ENCODE measurements at regions of chr11 and their contacts with region 1.

Region 1: GRCh38 chr11:79720115-79720514 is 279.3 kb upstream of the TENM4 start:
- DNase-seq: no peak
- H3K4me3 ChIP-seq: no peak overlapping the region
- H3K27ac ChIP-seq: no peak overlapping the region
- H3K27me3 ChIP-seq: no peaks in the 10 kb centered on the region
- CTCF ChIP-seq: no peak

Region 2: GRCh38 chr11:79708300-79708932 is 11.7 kb before region 1 on chr11:
- CTCF ChIA-PET with region 1: interaction called, 13 read pairs
- POLR2A ChIA-PET with region 1: no interaction called
- DNase-seq: peak; percentile 7
- H3K4me3 ChIP-seq: no peak overlapping the region
- H3K27ac ChIP-seq: no peak overlapping the region
- H3K27me3 ChIP-seq: no peaks in the 10 kb centered on the region
- CTCF ChIP-seq: peak; percentile 73